Lower leg skin (tissue), 4 donors: ENCODE measurements at regions of chr10 and their contacts with region 1.

Region 1: GRCh38 chr10:13659897-13660550 is 73.3 kb downstream of the PRPF18 start:
- DNase-seq: peak; percentile 51 to 91
- H3K4me3 ChIP-seq: no peak overlapping the region
- CTCF ChIP-seq: peak in 2 of 3 donors; percentile 18 to 89
- POLR2A ChIP-seq: no peak

Region 2: DNA sequence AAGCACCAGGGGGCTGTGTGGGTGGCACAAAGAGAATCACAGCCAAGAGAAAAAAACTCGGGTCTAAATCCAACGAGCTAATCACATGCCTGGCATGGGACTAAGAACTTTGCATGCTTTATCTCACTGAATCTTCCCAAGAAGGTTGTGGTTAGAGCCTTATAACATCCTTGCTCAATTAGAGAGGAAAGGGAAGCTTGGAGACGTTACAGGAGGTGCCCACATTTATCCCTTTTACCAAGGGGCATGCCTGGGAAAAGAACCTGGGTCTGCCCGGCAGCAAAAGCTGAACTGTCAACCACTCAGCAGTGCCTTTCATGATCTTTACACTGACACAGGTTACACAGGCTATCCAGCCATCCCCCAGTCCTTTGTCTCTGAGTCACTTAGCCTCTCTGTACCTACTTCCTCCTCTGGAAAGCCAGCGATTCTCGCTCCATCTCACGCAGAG is 116.9 kb after region 1 on chr10:
- intact Hi-C with region 1: loop called (anchors 5 kb)
- DNase-seq: no peak
- H3K4me3 ChIP-seq: no peak overlapping the region
- CTCF ChIP-seq: no peak
- POLR2A ChIP-seq: no peak